Activated CD8-positive, alpha-beta T cell treated with anti-CD3 and anti-CD28 coated beads for 36 hours (primary cell): ENCODE measurements at regions of chr3 and their contacts with region 1.

Region 1: DNA sequence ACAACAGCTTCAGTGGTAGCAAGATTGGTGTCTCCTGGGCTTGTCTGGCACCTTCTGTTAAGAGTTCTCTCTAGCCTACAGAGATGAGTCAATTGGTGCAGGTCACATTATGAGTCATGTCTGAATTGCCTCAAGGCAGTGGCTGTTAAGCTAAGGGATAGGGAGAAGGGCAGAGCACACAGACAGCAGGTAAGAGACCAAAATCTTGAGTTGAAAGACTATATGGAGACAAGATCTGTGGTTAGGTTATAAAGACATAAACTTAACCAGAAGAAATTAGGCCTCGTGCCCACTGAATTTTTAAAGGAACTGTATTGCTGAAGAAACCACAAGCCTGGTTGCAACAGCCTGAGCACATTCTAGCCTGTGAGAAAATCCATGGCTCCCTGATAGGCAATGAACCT is 19.2 kb upstream of the KPNA1 start:
- DNase-seq: peak; percentile 69
- ATAC-seq: peak; percentile 99
- H3K4me3 Mint-ChIP-seq: no peak overlapping the region
- H3K27ac Mint-ChIP-seq: peak overlapping the region; percentile 37
- H3K4me1 Mint-ChIP-seq: peaks cover 38% of the 10 kb centered on the region
- H3K27me3 Mint-ChIP-seq: no peaks in the 10 kb centered on the region
- CTCF ChIP-seq: no peak

Region 2: GRCh38 chr3:122497425-122497824 is 36.5 kb before region 1 on chr3:
- CTCF ChIA-PET with region 1: no interaction called
- POLR2A ChIA-PET with region 1: no interaction called
- intact Hi-C with region 1: loop called (anchors 1 kb)
- DNase-seq: peak; percentile 72
- ATAC-seq: peak; percentile 98
- H3K4me3 Mint-ChIP-seq: no peak overlapping the region
- H3K27ac Mint-ChIP-seq: peak overlapping the region; percentile 2
- H3K4me1 Mint-ChIP-seq: peaks cover 62% of the 10 kb centered on the region
- H3K27me3 Mint-ChIP-seq: no peaks in the 10 kb centered on the region
- CTCF ChIP-seq: no peak